Activated CD4-positive, alpha-beta T cell treated with anti-CD3 and anti-CD28 coated beads, Interleukin-2, amount 10 ng/mL, durations not matched to agents 7 days and 5 days (primary cell): ENCODE measurements at regions of chr1 and their contacts with region 1.

Region 1: GRCh38 chr1:89762779-89763648 is 57.8 kb upstream of the LRRC8D start:
- DNase-seq: peak; percentile 88
- H3K4me3 Mint-ChIP-seq: peak overlapping the region; percentile 73
- H3K27ac Mint-ChIP-seq: peak overlapping the region; percentile 79
- H3K4me1 Mint-ChIP-seq: peaks cover 55% of the 10 kb centered on the region
- H3K27me3 Mint-ChIP-seq: no peaks in the 10 kb centered on the region

Region 2: DNA sequence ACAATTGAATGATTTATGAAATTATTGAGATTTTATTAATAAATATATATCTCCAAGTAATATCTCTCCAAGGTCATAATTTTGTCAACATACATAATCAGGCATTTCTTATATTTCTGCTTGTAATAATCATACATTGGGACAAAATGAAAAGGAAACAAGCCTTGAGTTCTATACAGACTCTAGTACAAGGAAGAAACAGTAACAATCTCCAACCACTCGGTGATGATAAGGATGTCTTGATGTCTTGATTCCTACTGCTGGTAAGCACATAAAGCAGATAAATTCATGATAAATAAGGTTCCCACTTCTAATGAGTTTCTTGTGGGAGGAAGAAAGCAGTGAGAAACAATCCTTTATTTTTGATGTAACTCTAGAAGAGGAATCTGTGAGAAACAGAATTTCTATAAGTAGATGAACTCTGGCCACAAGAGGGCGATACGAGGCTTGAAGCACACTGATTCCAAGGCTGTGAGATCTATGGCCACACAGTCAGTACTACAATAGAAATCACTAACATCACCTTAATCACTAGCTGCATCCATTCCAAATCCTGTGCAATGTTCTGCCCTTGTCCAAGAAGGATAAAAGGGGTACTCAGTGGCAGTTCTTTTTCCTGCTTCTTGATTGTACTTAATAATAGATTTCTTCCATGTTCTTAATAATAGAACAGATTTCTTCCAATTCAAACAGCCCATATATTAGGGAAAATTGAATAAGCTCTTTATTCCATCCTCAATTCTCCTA is 279.8 kb before region 1 on chr1:
- CTCF ChIA-PET with region 1: interaction called, 17 read pairs
- POLR2A ChIA-PET with region 1: no interaction called
- DNase-seq: peak; percentile 90
- H3K4me3 Mint-ChIP-seq: no peak overlapping the region
- H3K27ac Mint-ChIP-seq: no peak overlapping the region
- H3K4me1 Mint-ChIP-seq: peaks cover 19% of the 10 kb centered on the region
- H3K27me3 Mint-ChIP-seq: no peaks in the 10 kb centered on the region

Region 3: GRCh38 chr1:89605692-89606091 is 157.3 kb before region 1 on chr1:
- CTCF ChIA-PET with region 1: interaction called, 20 read pairs
- POLR2A ChIA-PET with region 1: interaction called, 7 read pairs
- DNase-seq: no peak
- H3K4me3 Mint-ChIP-seq: no peak overlapping the region
- H3K27ac Mint-ChIP-seq: peak overlapping the region; percentile 99
- H3K4me1 Mint-ChIP-seq: peaks cover 93% of the 10 kb centered on the region
- H3K27me3 Mint-ChIP-seq: no peaks in the 10 kb centered on the region

Region 4: DNA sequence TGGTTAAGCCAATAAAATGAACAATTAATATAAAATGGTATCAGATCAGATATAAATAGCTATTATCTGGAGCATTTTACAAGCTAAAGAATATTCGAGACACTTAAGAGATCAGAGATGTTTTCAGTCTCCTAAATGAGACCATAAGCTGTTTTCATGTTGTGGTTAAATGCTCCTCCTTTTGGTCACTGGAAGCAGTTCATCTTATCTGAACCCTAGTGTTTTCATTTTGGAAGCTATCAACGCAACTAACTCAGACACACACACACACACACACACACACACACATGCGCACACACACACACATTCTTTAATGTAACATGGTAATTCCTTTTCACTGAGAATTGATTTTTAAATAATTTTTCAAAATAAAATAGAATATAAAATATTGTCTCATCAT is 140.1 kb before region 1 on chr1:
- CTCF ChIA-PET with region 1: interaction called, 41 read pairs
- POLR2A ChIA-PET with region 1: no interaction called
- DNase-seq: no peak
- H3K4me3 Mint-ChIP-seq: no peak overlapping the region
- H3K27ac Mint-ChIP-seq: no peak overlapping the region
- H3K4me1 Mint-ChIP-seq: peaks cover 58% of the 10 kb centered on the region
- H3K27me3 Mint-ChIP-seq: no peaks in the 10 kb centered on the region

Region 5: DNA sequence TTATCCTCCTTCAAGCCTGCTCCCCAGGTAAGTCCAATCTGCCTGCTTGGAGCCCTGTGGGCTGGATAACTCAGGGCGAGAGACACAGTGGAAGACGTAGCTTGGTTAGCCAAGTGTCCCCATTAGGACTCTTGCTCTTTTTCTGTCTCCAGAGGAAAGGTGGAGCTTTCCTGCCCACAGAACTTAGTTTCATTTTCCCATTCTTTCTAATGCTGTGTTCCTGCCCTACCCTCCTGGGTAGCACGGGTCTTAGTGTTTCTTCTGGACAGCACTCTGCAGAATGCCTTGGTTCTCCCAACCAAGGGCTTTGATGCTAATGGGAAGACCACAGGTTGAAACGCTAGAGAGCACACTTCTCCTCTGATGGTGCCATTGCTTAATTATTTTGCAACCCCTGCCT is 34.6 kb before region 1 on chr1:
- CTCF ChIA-PET with region 1: interaction called, 14 read pairs
- POLR2A ChIA-PET with region 1: no interaction called
- DNase-seq: no peak
- H3K4me3 Mint-ChIP-seq: no peak overlapping the region
- H3K27ac Mint-ChIP-seq: peak overlapping the region; percentile 68
- H3K4me1 Mint-ChIP-seq: peaks cover 83% of the 10 kb centered on the region
- H3K27me3 Mint-ChIP-seq: no peaks in the 10 kb centered on the region